Posterior cingulate gyrus (tissue), 11 donors: ENCODE measurements at regions of chr7 and their contacts with region 1.

Region 1: GRCh38 chr7:35037526-35038339 is 448 bp upstream of the DPY19L1 start:
- DNase-seq: peak; percentile 82 to 99 (median 92)

Region 2: DNA sequence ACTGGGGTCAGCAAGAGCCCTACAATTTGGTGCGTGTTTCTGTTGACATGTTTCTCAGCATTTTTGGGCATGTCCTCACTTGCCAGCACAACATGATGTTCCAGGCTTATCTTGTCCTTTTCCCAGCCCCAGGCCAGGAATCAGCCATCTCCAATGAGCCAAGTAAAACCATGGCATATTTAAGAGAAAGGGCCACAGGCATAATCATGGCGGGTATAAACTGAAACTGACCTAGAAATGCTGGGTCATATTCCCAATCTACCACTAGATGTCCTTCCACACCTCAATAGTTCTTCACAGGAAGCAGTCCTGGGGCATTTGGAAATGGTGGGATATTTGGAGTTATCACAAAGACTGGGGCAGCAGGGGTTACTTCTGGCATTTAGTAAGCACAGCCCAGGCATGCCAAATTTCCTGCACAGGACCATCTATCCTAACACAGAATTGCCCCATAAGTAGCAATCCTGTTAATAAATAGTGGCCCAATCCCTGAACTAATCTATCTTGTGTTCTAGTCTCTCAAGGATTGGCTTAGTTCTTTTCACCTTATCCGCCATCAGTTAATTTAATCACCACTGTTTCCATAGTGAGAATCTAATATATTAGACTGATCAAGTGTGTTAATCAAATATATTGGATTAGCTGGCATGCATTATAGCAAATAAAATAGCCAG is 278.1 kb before region 1 on chr7:
- intact Hi-C with region 1: loop called (anchors 10 kb)
- DNase-seq: no peak